Activated CD4-positive, alpha-beta T cell treated with anti-CD3 and anti-CD28 coated beads, Interleukin-2, amount 10 ng/mL, durations not matched to agents 24 days and 14 days (primary cell): ENCODE measurements at regions of chr5 and their contacts with region 1.

Region 1: DNA sequence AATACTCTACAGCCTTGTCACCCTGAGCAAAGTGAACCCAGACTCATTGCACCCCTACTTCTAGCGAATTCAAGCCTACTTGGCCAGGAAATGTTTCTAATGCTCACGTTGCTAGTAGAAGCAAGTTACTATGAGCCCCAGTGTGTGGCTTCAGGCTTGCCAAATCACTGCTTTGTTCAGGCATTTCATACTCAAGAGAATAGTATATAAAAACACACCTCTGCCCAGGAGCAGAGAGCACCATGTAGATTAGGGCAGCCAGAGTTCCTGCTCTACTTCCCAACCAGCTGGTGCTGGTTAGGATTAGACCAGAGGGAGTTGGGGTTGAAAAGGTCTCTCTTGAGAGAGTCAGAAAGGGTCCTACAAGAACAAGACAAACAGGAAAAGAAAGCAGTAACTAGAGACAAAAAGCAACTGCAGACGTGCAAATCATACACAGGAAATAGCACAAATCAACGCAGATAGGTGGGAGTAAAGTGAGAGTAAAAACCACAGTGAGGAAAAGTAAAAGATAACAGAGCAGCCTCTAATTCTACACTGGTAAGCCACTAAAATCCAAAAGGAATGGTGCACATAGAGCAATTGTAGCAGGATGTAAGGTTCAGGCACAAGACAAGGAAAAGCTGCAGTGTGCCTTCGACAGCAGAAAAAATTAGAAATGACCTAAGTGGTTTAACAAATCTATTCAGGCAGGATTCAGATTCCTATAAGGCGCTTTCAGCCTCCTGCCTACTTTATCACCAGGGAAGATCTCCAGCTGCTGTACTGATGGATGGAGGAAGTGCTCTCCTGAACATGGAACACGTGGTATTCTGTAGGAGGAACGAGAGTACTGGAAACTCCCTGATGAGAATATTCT is 49.6 kb upstream of the KIF2A start:
- DNase-seq: peak; percentile 76
- H3K4me3 Mint-ChIP-seq: peak overlapping the region; percentile 69
- H3K27ac Mint-ChIP-seq: peak overlapping the region; percentile 83
- H3K4me1 Mint-ChIP-seq: peaks cover 54% of the 10 kb centered on the region
- H3K27me3 Mint-ChIP-seq: no peaks in the 10 kb centered on the region

Region 2: DNA sequence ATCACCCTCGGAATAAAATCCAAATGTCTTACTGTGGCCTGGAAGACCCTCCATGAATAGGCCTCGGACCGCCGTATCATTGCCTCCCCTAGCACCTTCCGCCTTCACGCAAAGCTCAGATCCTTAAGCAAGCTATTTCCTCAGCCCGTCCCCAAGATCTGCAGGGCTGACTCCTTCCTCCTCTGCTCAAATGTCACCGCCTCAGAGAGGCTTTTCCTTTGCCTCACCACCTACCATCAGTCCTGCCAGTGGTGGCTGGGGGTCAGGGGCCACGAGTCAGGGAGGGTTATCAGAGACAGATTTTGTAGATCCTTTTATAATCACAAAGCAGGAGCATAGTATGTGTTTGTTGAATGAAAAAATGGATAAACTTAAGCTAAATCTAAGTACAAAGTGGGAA is 24.8 kb before region 1 on chr5:
- intact Hi-C with region 1: loop called (anchors 2 kb)
- DNase-seq: no peak
- H3K4me3 Mint-ChIP-seq: no peak overlapping the region
- H3K27ac Mint-ChIP-seq: peak overlapping the region; percentile 52
- H3K4me1 Mint-ChIP-seq: peaks cover 44% of the 10 kb centered on the region
- H3K27me3 Mint-ChIP-seq: no peaks in the 10 kb centered on the region

Region 3: GRCh38 chr5:62268234-62268633 is 11.8 kb after region 1 on chr5:
- intact Hi-C with region 1: loop called (anchors 1 kb)
- DNase-seq: no peak
- H3K4me3 Mint-ChIP-seq: peak overlapping the region; percentile 27
- H3K27ac Mint-ChIP-seq: peak overlapping the region; percentile 81
- H3K4me1 Mint-ChIP-seq: peaks cover 47% of the 10 kb centered on the region
- H3K27me3 Mint-ChIP-seq: no peaks in the 10 kb centered on the region

Region 4: DNA sequence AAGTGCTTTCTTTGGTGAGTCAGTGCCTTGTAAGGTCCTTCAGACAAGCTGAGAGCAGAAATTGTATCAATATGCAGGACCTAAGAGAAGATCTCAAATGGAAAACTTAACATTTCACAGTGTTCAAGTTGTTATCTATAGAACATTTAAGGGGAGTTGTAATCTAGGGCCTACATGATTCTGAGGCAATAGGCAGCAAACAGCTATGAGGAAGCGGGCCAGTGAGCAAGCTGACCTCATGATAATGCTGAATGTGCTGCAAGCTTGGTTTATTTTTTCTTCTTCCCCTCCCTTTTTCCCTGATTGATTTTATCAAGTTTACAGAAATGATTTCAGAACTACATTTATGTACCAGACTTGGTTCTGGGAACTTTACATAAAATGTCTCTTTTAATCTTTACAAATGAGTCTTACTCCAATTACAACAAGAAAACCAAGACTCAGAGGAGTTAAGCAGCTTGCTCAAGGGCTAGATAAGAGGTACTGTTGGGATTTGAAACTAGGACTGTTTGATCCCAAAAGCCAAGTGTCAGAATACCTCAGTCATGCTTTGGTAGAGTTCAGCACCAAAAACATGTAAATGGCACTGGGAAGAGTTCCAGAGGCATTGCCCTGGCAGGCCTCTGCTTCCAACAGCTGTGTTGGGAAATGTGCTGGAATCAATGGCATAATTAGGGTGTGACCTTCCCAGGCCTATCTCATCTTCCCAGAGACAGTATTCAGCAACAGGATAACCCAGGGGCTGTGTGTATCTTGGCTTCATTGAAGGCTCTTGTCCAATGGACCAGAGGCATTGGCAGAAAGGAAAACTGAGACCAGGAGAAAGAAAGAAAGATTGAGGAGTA is 452.3 kb after region 1 on chr5:
- intact Hi-C with region 1: no loop called
- DNase-seq: no peak
- H3K4me3 Mint-ChIP-seq: no peak overlapping the region
- H3K27ac Mint-ChIP-seq: no peak overlapping the region
- H3K4me1 Mint-ChIP-seq: no peaks in the 10 kb centered on the region
- H3K27me3 Mint-ChIP-seq: peaks cover 2% of the 10 kb centered on the region